ENCODE measurements at regions of chr11 and their contacts with region 1.

Region 1: DNA sequence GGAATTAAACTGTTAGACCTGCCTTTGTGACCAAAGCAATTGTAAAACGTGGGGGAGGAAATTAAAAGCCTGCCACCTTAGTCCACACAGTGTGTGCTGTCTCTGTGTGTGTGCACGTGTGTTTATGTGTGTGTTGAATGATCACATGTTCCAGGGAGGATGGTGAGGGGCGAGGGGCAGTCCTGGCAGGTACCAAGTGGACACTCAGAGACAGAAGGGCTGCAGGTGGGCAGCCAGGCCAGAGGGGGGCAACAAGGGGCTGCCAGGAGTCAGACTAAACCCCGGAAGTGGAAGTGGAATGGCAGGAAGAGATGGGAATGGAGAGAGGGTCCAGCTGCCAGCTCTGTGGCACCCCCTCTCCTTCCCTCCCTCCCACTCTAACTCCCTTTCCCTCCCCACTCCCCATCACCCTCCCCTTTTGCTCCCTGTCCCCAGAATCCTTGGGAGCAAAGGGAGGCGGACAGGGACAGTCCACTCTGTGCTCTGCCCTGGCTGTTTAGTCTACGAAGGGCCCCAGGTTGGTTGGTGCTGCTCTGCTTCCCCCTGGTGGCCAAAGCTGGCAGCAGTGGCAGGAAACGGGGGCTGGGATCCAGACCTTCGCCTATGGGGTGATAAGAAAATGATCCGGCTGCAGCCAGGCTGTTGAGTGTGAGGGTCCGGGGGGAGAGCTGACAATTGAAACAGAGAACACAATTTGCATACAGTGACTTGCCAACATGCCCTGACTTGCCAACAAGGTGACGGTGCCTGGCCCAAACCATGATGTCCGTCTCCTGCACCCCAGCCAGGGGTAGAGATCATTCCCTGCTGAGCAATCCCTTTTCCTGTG is 24.4 kb downstream of the P2RY2 start:
- DNase-seq: peak; percentile 85
- ATAC-seq: peak; percentile 66

Region 2: DNA sequence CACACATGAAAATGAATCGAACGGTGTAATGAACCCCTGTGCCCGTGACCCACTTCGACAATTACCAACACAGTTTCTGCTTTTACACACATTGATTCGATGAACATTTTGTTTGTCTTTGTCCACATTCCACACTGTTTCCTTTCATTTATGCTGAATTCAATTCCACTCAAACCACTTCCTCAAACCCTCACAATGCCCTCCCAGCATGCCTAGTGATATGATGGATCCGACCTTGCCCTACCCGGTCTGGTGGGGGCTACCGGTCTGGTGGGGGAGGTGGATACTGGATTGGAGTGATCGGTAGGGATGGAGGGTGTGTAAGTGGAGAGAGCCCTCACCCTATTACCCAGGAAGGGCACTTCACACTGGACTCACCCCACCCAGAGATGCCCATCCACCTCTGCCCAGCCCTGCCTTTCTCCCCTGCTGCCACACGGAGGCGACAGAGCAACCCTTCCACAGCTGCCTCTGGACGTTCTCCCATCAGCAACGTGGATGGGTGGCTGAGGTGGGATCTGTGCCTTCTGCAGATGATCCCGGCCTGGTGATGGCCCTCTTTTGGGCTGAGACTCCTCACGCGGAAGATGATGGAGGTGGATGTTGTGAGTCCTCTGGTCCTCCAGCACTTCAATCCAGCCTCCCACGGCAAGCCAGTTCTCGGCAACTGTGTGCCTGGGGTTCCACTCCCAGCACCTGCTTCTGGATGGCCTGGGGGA is 57.4 kb before region 1 on chr11:
- intact Hi-C with region 1: loop called (anchors 5 kb)
- DNase-seq: peak; percentile 78
- ATAC-seq: peak; percentile 59